Left lung (tissue), 14 donors: ENCODE measurements at regions of chr6 and their contacts with region 1.

Region 1: GRCh38 chr6:112180095-112180820 is 74.1 kb downstream of the LAMA4 start:
- DNase-seq: peak in 2 of 4 donors; percentile 68 to 85
- ATAC-seq: peak; percentile 80
- H3K4me3 ChIP-seq: no peak overlapping the region
- H3K27ac ChIP-seq: no peak overlapping the region
- H3K4me1 ChIP-seq: no peaks in the 10 kb centered on the region
- H3K27me3 ChIP-seq: no peaks in the 10 kb centered on the region
- CTCF ChIP-seq: peak; percentile 52 to 56

Region 2: DNA sequence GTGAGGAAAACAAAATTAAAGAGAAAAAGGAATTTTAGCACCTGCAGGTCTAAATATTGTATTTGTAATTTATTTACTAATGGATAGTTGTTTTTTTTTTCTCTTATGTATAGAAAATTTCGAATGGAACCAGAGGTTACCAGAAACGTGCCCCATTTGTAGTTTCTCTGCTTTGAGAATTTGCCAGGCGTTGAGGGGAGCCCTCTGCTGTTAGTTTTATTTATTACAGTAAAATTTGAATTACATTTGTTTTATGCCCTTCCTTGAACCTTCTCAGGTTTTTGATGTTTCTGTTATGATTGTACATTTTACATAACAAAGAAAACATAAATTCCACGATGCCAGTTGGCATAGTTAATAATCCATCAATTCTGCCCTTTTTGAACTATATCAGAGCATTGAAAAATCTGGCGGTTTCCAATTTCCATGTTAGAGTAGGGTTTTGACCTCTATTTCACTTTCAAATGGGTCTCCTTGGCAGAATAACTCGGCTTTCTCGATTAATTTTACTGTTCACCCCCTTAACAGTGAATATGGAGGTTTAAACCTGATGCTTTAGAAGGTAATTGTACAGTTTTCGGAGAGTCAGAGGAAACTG is 131.8 kb after region 1 on chr6:
- intact Hi-C with region 1: loop called (anchors 5 to 10 kb)
- DNase-seq: no peak
- ATAC-seq: peak; percentile 65
- H3K4me3 ChIP-seq: no peak overlapping the region
- H3K27ac ChIP-seq: no peak overlapping the region
- H3K4me1 ChIP-seq: no peaks in the 10 kb centered on the region
- H3K27me3 ChIP-seq: no peaks in the 10 kb centered on the region
- CTCF ChIP-seq: peak; percentile 31 to 54